Activated CD8-positive, alpha-beta memory T cell treated with anti-CD3 and anti-CD28 coated beads, Interleukin-2, amount 10 ng/mL, durations not matched to agents 7 days and 5 days (primary cell): ENCODE measurements at regions of chr19 and their contacts with region 1.

Region 1: DNA sequence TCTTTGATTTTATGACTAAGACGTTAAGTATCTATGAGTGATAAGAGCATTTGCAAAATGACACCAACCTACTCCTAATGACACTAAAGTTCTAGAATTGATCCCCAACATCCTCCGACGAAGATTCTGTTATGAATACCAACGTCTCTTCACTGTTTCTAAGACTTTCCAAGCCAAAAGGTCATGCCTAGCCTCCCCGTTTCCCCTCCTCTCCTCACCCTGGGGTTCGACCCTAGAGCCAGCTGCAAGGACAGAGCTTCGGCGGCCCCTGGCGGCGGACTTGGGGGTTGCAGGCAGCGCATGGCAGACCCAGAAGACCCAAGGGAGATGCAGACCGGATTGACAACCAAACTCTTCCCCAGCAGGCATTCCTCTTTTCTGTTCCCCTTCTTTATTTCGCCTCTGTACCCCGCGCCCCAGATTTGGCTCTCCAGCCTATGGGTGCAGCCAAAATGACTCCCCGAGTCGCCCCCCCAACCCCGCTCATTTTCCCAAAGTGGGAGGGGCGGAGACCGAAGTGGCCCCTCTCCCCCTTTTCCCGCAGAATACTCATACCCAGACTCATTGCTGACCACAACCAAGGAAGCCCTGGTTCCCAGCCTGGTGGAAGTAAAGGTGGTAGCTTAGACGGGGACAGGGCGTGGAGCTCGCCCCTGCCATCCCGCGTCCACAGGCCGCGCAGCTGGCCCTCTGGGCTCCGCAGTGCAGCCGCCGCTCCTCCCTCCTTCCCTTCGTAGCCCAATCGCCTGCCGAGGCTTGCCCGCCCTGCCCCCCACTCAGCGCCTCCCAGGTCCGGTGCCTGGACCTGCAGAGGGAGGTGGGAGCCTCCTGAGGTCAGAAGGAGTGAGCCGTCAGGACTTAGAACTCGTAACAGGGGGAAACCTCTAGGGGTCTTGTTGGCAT is 4.1 kb upstream of the EML2 start:
- DNase-seq: peak; percentile 93
- ATAC-seq: peak; percentile 7
- H3K4me3 Mint-ChIP-seq: peak overlapping the region; percentile 73
- H3K27ac Mint-ChIP-seq: peak overlapping the region; percentile 99
- H3K4me1 Mint-ChIP-seq: peaks cover 46% of the 10 kb centered on the region
- H3K27me3 Mint-ChIP-seq: no peaks in the 10 kb centered on the region

Region 2: DNA sequence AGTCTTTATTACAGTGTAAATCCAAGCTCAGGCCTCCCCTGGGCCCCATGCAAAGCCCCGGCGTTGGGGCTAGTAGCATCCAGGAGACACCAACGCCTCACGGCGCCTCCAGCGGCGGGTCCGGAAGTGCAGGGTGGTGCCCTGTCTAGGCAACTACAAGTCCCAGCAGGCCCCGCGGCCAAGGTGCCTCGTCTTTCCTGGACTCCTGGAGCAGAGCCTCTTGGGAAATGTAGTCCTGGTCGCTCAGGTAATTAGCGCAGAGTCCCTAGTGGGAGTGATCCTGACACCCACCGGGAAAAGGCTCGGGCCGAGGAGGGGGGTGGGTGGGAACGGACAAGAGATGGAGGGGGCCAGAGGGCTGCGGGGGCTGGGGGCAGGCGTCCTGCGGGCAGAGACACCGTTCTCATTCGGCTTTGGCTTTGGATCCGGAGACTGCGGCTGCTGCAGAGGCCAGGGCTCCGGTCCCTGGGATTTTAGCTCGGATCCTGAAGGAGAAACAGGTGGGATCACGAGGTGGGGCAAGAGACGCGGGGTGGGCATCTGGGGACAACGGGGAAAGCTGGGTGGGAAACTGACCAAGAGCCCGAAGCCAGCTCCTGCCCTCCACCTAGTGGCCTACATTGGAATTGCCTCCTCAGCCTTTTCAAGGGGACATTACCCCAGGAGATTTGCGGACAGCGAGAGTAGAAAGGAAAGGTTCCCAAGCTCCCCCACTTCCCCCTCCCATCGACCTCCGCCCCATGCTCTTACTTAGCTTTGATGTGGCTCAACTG is 157.8 kb before region 1 on chr19:
- CTCF ChIA-PET with region 1: interaction called, 33 read pairs
- DNase-seq: peak; percentile 99
- ATAC-seq: peak; percentile 98
- H3K4me3 Mint-ChIP-seq: peak overlapping the region; percentile 85
- H3K27ac Mint-ChIP-seq: peak overlapping the region; percentile 90
- H3K4me1 Mint-ChIP-seq: peaks cover 12% of the 10 kb centered on the region
- H3K27me3 Mint-ChIP-seq: no peaks in the 10 kb centered on the region

Region 3: GRCh38 chr19:45515081-45515624 is 128.1 kb before region 1 on chr19:
- CTCF ChIA-PET with region 1: interaction called, 15 read pairs
- DNase-seq: peak; percentile 56
- ATAC-seq: peak; percentile 57
- H3K4me3 Mint-ChIP-seq: peak overlapping the region; percentile 39
- H3K27ac Mint-ChIP-seq: peak overlapping the region; percentile 90
- H3K4me1 Mint-ChIP-seq: peaks cover 62% of the 10 kb centered on the region
- H3K27me3 Mint-ChIP-seq: no peaks in the 10 kb centered on the region

Region 4: GRCh38 chr19:45591004-45591637 is 52.2 kb before region 1 on chr19:
- CTCF ChIA-PET with region 1: interaction called, 14 read pairs
- DNase-seq: peak; percentile 61
- ATAC-seq: peak; percentile 78
- H3K4me3 Mint-ChIP-seq: no peak overlapping the region
- H3K27ac Mint-ChIP-seq: no peak overlapping the region
- H3K4me1 Mint-ChIP-seq: peaks cover 13% of the 10 kb centered on the region
- H3K27me3 Mint-ChIP-seq: peaks cover 40% of the 10 kb centered on the region

Region 5: DNA sequence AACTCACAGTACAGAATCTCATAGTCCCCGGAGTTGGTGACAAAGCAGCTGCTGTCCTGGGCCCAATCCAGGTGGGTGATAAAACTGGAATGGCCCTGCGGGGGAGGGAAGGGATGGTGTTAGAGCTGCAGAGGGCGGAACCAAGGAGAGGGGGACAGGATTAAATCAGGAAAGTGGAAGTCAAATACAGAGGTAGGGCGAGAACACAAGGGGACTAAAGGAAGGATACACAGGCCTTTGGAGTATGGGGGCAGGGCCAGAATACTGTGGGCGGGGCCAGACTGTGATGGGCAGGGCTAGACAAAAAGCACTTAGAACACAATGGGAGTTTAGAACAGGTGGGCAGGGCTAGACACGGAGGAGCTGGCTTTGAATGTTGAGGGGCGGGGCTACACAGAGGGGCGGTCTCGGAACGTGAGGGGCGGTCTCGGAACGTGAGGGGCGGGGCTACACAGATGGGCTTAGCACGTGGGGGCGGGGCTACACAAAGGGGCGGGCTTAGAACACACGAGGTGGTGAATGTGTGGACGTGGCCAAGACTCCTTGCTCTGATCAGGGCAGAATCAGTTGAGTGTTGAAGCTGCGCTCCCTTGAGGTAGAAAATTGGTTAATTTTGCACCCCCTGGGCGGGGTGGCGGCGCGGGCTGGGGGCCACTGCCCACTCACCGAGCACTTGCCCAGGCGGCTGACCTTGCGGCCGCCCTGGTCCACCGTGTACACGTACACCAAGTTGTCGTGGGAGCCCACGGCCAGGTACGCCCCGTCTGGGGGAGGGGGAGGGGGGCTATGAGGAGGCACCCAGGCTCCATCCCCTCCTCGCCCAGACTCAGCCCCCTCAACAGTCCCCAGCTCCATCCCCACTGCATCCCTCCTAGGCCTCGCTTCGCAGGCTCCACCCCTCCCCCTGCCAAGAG is 27.2 kb before region 1 on chr19:
- CTCF ChIA-PET with region 1: interaction called, 71 read pairs
- DNase-seq: peak; percentile 88
- ATAC-seq: peak; percentile 73
- H3K4me3 Mint-ChIP-seq: no peak overlapping the region
- H3K27ac Mint-ChIP-seq: no peak overlapping the region
- H3K4me1 Mint-ChIP-seq: peaks cover 29% of the 10 kb centered on the region
- H3K27me3 Mint-ChIP-seq: no peaks in the 10 kb centered on the region

Region 6: DNA sequence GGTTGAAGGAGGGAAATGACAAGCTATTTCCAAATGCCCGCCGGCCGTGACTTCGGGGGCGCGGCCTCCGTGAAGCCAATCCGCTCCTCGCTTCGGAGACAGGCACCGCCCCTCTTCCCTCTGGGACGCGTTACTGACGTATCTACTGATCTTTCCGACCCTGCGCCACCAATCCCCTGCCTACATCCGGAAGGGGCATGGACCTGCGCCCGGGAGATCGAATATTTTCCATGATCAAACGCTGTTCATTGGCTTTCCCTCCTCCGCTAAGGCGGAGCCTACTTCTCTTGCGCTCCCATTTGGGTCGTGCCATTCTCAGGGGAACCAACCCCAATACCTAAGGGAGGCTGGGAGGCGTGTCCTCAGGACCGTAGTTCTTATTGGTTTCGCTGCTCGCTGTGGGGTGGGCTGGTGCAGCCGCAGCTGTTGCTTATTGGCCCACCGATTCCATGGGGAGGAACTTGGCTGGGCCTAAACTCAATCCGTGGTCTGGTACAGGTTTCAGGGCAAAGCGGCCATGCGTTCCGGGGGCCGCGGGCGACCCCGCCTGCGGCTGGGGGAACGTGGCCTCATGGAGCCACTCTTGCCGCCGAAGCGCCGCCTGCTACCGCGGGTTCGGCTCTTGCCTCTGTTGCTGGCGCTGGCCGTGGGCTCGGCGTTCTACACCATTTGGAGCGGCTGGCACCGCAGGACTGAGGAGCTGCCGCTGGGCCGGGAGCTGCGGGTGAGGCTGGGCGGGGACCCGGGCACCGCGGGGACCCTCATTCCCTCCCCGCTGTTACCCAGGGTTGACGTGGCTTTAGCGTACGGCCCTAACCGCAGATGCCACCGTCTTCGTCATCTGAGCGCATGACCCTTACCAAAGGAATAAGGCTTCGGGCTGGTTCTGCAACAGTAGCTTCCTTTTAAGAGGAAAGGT is 49.2 kb after region 1 on chr19 and contains the start of gene QPCTL:
- CTCF ChIA-PET with region 1: interaction called, 28 read pairs
- DNase-seq: peak; percentile 99
- ATAC-seq: peak; percentile 92
- H3K4me3 Mint-ChIP-seq: peak within 1 kb of the TSS; percentile 98
- H3K27ac Mint-ChIP-seq: peak within 1 kb of the TSS; percentile 97
- H3K4me1 Mint-ChIP-seq: peaks cover 23% of the 10 kb centered on the region
- H3K27me3 Mint-ChIP-seq: no peaks in the 10 kb centered on the region
- total RNA-seq, gene QPCTL: 9.6 to 12.7 TPM

Region 7: DNA sequence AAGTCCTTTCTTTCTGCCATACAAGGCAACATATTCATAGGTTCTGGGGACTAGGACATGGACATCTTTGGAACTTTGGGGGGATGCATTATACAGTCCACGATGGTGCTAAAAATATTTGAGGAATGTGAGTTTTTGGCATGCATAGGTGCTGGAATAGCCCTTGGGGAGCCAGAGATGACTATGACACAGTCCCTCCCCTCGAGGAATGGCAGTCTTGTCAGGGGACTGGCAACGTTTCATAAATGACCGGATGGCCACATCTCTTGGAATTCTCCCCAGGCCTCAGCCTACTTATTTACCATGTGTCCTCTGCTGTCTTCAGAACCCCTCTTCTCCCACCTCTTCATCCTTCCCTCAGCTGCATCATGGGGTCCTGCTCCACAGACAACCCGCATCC is 103.6 kb after region 1 on chr19:
- CTCF ChIA-PET with region 1: no interaction called
- DNase-seq: no peak
- ATAC-seq: no peak
- H3K4me3 Mint-ChIP-seq: no peak overlapping the region
- H3K27ac Mint-ChIP-seq: no peak overlapping the region
- H3K4me1 Mint-ChIP-seq: no peaks in the 10 kb centered on the region
- H3K27me3 Mint-ChIP-seq: peaks cover 22% of the 10 kb centered on the region

Region 8: GRCh38 chr19:45809643-45810159 is 166.4 kb after region 1 on chr19:
- CTCF ChIA-PET with region 1: no interaction called
- DNase-seq: no peak
- ATAC-seq: peak; percentile 59
- H3K4me3 Mint-ChIP-seq: peak overlapping the region; percentile 26
- H3K27ac Mint-ChIP-seq: peak overlapping the region; percentile 88
- H3K4me1 Mint-ChIP-seq: peaks cover 15% of the 10 kb centered on the region
- H3K27me3 Mint-ChIP-seq: peaks cover 6% of the 10 kb centered on the region